CD8-positive, alpha-beta memory T cell (primary cell): ENCODE measurements at regions of chr2 and their contacts with region 1.

Region 1: GRCh38 chr2:73176881-73177644 is 25.3 kb upstream of the NOTO start:
- DNase-seq: peak; percentile 83 to 89 (median 87)
- H3K4me3 ChIP-seq: peak overlapping the region; percentile 81
- H3K4me3 Mint-ChIP-seq: peak overlapping the region; percentile 87 to 95 (median 89)
- H3K27ac ChIP-seq: no peak overlapping the region
- H3K27ac Mint-ChIP-seq: peak overlapping the region; percentile 23 to 81 (median 55)
- H3K4me1 ChIP-seq: peaks cover 22% of the 10 kb centered on the region
- H3K4me1 Mint-ChIP-seq: peaks cover 14 to 22% (median 15%) of the 10 kb centered on the region in 3 donors
- H3K27me3 ChIP-seq: peaks cover 10% of the 10 kb centered on the region
- H3K27me3 Mint-ChIP-seq: peaks cover 15 to 54% of the 10 kb centered on the region in 2 donors

Region 2: DNA sequence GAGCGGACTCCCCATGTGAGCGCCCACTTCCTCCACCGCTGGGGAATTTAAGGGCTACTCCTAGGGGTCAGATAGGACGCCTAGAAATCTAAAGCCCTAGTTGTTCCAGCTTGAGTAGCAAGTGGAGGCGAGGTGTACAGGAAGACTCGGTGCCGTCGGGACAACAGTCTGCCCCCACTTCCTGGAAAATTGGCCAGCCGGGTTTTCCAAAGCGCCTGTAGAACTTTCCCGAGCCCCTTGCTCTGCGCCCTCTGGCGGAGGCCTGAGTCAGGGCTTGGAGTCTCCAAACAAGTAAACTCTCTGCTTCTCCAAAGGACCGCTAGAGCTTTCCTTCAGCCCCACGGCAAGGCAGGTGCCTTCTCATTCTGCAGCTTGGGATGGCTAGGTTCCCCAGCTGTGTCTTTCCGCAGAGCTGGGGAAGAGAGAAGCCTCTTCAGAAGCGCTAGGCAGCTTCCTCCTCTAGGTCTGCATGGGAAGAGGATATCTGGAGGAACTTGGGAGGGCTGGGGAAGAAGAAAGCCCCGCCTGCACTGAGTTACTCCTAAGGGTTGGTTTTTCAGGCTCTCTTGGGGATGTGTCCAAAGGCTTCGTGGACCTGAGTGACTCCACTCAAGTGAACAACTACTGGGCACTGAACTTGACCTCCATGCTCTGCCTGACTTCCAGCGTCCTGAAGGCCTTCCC is 289.2 kb before region 1 on chr2:
- CTCF ChIA-PET with region 1: interaction called, 29 read pairs
- POLR2A ChIA-PET with region 1: no interaction called
- DNase-seq: peak in 4 of 5 donors; percentile 20 to 60 (median 27)
- H3K4me3 ChIP-seq: peak overlapping the region; percentile 65
- H3K4me3 Mint-ChIP-seq: peak overlapping the region; percentile 77 to 90 (median 79)
- H3K27ac ChIP-seq: peak overlapping the region; percentile 47
- H3K27ac Mint-ChIP-seq: no peak overlapping the region
- H3K4me1 ChIP-seq: peaks cover 8% of the 10 kb centered on the region
- H3K4me1 Mint-ChIP-seq: peaks cover 0 to 12% (median 5%) of the 10 kb centered on the region in 3 donors
- H3K27me3 ChIP-seq: peaks cover 29% of the 10 kb centered on the region
- H3K27me3 Mint-ChIP-seq: peaks cover 32 to 72% of the 10 kb centered on the region in 2 donors

Region 3: DNA sequence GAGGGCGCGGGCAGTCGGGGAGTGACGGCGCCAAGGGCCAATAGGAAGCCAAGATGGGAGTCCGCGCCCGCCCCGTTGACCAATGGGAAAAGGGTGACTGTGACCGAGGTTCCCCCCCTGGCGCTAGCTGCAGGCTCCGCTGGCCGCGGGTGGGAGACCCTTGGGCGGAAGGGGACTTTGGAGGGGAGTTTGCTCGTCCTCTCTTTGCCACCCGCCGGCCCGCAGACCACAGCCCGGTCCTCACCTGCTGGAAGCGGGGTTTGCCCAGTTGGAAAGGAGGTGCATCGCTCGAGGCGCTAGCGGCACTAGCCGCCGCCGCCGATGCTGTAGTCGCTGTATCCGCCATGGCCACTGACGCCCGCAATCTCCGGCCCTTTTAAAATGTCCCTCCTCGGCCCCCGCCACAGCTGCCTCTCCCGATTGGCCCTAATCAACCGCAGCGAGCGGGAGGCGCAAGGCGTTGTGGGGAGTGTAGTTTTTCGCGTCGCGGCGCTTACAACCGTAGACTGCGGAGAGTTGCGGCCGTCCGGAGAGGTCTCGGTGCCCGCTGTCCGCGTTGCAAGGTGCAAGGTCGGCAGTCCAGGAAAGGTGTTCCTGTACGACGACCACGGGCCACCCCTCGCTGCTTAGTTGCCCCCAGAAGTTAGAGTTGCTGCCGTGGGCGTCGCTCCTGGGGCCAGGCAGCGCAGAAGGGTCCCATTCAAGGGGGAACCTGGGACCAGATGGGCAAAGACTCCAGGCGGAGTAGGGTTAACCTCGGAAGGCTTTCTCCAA is 105.5 kb before region 1 on chr2 and contains the start of gene SFXN5:
- CTCF ChIA-PET with region 1: interaction called, 23 read pairs
- POLR2A ChIA-PET with region 1: no interaction called
- DNase-seq: peak; percentile 91 to 94 (median 93)
- H3K4me3 ChIP-seq: peak within 1 kb of the TSS; percentile 92
- H3K4me3 Mint-ChIP-seq: peak within 1 kb of the TSS; percentile 86 to 98 (median 93)
- H3K27ac ChIP-seq: peak within 1 kb of the TSS; percentile 85
- H3K27ac Mint-ChIP-seq: peak within 1 kb of the TSS; percentile 86 to 96 (median 90)
- H3K4me1 ChIP-seq: peaks cover 12% of the 10 kb centered on the region
- H3K4me1 Mint-ChIP-seq: peaks cover 26 to 32% (median 29%) of the 10 kb centered on the region in 3 donors
- H3K27me3 ChIP-seq: no peaks in the 10 kb centered on the region
- H3K27me3 Mint-ChIP-seq: peaks cover 0 to 5% of the 10 kb centered on the region in 2 donors
- total RNA-seq, gene SFXN5: 16.8 to 19.1 TPM

Region 4: GRCh38 chr2:73112913-73113633 is 64.0 kb before region 1 on chr2 and contains the start of gene RAB11FIP5:
- CTCF ChIA-PET with region 1: interaction called, 15 read pairs
- POLR2A ChIA-PET with region 1: no interaction called
- DNase-seq: peak; percentile 75 to 82 (median 81)
- H3K4me3 ChIP-seq: peak within 1 kb of the TSS; percentile 62
- H3K4me3 Mint-ChIP-seq: peak within 1 kb of the TSS; percentile 83 to 89 (median 87)
- H3K27ac ChIP-seq: peak within 1 kb of the TSS; percentile 38
- H3K27ac Mint-ChIP-seq: peak within 1 kb of the TSS; percentile 42 to 90 (median 73)
- H3K4me1 ChIP-seq: peaks cover 12% of the 10 kb centered on the region
- H3K4me1 Mint-ChIP-seq: peaks cover 26 to 31% (median 28%) of the 10 kb centered on the region in 3 donors
- H3K27me3 ChIP-seq: no peaks in the 10 kb centered on the region
- H3K27me3 Mint-ChIP-seq: peaks cover 0 to 2% of the 10 kb centered on the region in 2 donors
- total RNA-seq, gene RAB11FIP5: 2.7 to 4.3 TPM

Region 5: GRCh38 chr2:73187549-73187948 is 10.5 kb after region 1 on chr2:
- CTCF ChIA-PET with region 1: interaction called, 36 read pairs
- POLR2A ChIA-PET with region 1: no interaction called
- DNase-seq: no peak
- H3K4me3 ChIP-seq: no peak overlapping the region
- H3K4me3 Mint-ChIP-seq: no peak overlapping the region
- H3K27ac ChIP-seq: no peak overlapping the region
- H3K27ac Mint-ChIP-seq: no peak overlapping the region
- H3K4me1 ChIP-seq: no peaks in the 10 kb centered on the region
- H3K4me1 Mint-ChIP-seq: no peaks in the 10 kb centered on the region
- H3K27me3 ChIP-seq: no peaks in the 10 kb centered on the region
- H3K27me3 Mint-ChIP-seq: peaks cover 20 to 38% of the 10 kb centered on the region in 2 donors

Region 6: DNA sequence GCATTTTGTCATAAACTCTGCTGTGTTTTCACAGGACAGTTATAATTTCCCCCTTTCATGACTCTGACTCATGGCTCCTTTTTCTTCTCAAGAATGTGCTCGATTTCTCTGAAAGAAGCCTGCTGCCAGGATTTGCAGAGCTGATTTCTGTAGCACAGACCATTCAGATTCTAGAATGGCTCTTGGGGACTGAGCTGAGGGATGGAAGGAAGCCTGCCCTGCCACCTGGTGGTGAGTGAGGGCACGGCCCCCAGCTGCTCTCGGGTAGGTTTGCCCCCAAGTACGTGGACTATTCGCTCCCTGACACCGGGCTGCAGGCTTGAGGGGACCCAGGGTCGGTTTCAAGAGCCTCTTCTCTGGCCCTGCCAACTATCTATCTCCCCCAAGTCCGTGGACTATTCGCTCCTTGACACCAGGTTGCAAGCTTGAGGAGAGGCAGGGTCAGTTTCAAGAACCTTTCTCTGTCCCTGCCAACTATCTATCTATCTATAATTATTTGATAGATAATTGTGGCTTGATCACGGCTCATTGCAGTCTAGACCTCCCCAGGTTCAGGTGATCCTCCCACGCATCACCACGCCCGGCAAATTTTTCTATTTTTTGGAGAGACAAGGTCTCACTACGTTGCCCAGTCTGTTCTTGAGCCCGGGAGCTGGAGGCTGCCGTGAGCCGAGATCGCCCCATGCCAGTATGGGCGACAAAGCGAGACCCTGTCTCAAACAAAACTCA is 35.5 kb after region 1 on chr2:
- CTCF ChIA-PET with region 1: interaction called, 52 read pairs
- POLR2A ChIA-PET with region 1: no interaction called
- DNase-seq: peak; percentile 56 to 77 (median 60)
- H3K4me3 ChIP-seq: no peak overlapping the region
- H3K4me3 Mint-ChIP-seq: peak overlapping the region; percentile 58 to 95 (median 68)
- H3K27ac ChIP-seq: peak overlapping the region; percentile 61
- H3K27ac Mint-ChIP-seq: peak overlapping the region in 7 of 8 donors; percentile 10 to 96 (median 53)
- H3K4me1 ChIP-seq: peaks cover 28% of the 10 kb centered on the region
- H3K4me1 Mint-ChIP-seq: peaks cover 28 to 38% (median 29%) of the 10 kb centered on the region in 3 donors
- H3K27me3 ChIP-seq: no peaks in the 10 kb centered on the region
- H3K27me3 Mint-ChIP-seq: peaks cover 5 to 13% of the 10 kb centered on the region in 2 donors

Region 7: GRCh38 chr2:73293534-73294171 is 116.6 kb after region 1 on chr2 and contains the start of gene EGR4:
- CTCF ChIA-PET with region 1: interaction called, 11 read pairs
- POLR2A ChIA-PET with region 1: no interaction called
- DNase-seq: peak; percentile 85 to 95 (median 88)
- H3K4me3 ChIP-seq: peak within 1 kb of the TSS; percentile 21
- H3K4me3 Mint-ChIP-seq: peak within 1 kb of the TSS; percentile 65 to 90 (median 79)
- H3K27ac ChIP-seq: no peak within 1 kb of the TSS
- H3K27ac Mint-ChIP-seq: peak within 1 kb of the TSS in 4 of 8 donors; percentile 12 to 58 (median 27)
- H3K4me1 ChIP-seq: peaks cover 27% of the 10 kb centered on the region
- H3K4me1 Mint-ChIP-seq: peaks cover 8 to 34% (median 20%) of the 10 kb centered on the region in 3 donors
- H3K27me3 ChIP-seq: peaks cover 50% of the 10 kb centered on the region
- H3K27me3 Mint-ChIP-seq: peaks cover 46 to 67% of the 10 kb centered on the region in 2 donors
- total RNA-seq, gene EGR4: 0.31 to 0.55 TPM